Caco-2 (cell line): ENCODE measurements at regions of chr9 and their contacts with region 1.

Region 1: DNA sequence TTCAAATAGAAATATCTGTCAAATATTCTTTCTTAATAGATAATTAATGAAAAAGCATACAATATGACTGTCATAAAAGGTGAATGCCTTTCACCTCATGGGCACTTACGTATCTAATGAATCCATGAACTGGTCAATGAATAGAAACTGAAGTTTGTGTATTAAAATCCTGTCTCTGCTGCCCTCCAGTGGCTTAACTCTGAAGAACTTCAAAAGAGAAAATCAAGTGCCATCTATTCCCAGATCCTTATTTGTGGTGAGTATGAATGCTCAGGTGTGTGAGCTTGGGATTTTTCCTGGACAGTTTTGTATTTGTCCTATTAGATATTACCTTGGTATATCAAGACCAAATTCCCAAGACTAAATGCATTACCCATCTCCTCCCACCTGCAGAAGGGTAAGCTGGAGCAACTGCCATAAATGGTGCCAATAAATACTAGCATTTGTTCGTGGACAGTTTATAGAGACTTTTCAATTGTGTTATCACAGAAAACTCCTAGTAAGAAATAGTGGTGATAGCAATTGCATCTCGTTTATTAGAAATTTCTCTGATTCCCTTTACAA is 44.0 kb upstream of the SVEP1 start:
- DNase-seq: peak in 1 of 2 experiments; percentile 62
- H3K4me3 ChIP-seq: no peak overlapping the region
- H3K4me3 Mint-ChIP-seq: no peak overlapping the region
- H3K27ac Mint-ChIP-seq: no peak overlapping the region
- H3K4me1 ChIP-seq: no peaks in the 10 kb centered on the region
- H3K4me1 Mint-ChIP-seq: no peaks in the 10 kb centered on the region
- H3K27me3 ChIP-seq: no peaks in the 10 kb centered on the region
- H3K27me3 Mint-ChIP-seq: peaks cover 2% of the 10 kb centered on the region
- CTCF ChIP-seq: peak; percentile 55 to 77

Region 2: DNA sequence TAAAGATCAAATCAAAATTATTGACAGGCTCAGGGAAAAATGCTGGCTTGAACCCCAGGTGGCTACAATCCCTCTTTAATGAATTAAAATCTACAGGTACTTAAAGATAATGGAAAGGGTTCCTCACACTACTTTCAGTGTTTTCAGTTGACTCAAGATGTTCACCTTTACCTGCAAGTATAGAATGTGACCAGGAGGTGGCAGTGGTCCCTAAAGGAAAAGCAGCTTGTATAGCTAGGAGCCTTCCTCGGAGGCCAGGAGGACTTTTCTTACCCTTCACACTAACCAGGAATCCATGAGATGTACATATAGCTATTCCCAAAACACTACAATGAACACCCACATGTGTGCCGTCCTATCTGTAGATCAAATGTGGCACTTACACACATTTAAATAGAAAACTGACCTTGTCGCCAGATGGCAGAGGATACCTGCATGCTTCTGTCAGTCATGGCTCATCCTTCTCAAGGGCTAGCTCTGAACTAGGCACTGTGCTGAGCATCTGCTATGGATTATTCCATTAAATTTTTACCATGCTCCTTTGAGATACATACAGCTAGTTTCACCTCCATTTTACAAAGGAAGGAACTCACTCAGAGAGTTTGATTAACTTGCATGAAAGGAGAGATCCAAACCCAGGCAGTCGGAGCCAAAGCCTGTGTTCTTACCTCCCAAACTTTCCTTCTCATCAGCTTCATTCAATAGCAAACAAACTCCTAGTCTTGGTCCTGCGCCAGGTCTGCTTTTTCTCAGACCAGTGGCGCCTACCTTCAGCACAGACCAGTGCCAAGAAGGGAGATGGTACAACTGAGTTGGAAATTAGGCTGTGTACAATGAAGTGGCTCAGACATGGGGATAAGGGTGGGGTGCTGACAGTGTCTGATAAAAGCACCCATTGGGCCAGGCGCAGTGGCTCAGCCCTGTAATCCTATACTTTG is 440.1 kb before region 1 on chr9:
- CTCF ChIA-PET with region 1: interaction called, 16 read pairs
- POLR2A ChIA-PET with region 1: no interaction called
- intact Hi-C with region 1: loop called (anchors 1 kb)
- DNase-seq: peak; percentile 79 to 81
- H3K4me3 ChIP-seq: no peak overlapping the region
- H3K4me3 Mint-ChIP-seq: no peak overlapping the region
- H3K27ac Mint-ChIP-seq: no peak overlapping the region
- H3K4me1 ChIP-seq: no peaks in the 10 kb centered on the region
- H3K4me1 Mint-ChIP-seq: no peaks in the 10 kb centered on the region
- H3K27me3 ChIP-seq: no peaks in the 10 kb centered on the region
- H3K27me3 Mint-ChIP-seq: no peaks in the 10 kb centered on the region
- CTCF ChIP-seq: peak; percentile 70 to 87

Region 3: GRCh38 chr9:110340314-110340713 is 283.2 kb before region 1 on chr9:
- CTCF ChIA-PET with region 1: no interaction called
- POLR2A ChIA-PET with region 1: no interaction called
- intact Hi-C with region 1: loop called (anchors 1 kb)
- DNase-seq: peak in 1 of 2 experiments; percentile 32
- H3K4me3 ChIP-seq: no peak overlapping the region
- H3K4me3 Mint-ChIP-seq: no peak overlapping the region
- H3K27ac Mint-ChIP-seq: no peak overlapping the region
- H3K4me1 ChIP-seq: no peaks in the 10 kb centered on the region; the same call in 1 of the 2 replicates
- H3K4me1 Mint-ChIP-seq: no peaks in the 10 kb centered on the region
- H3K27me3 ChIP-seq: no peaks in the 10 kb centered on the region
- H3K27me3 Mint-ChIP-seq: no peaks in the 10 kb centered on the region
- CTCF ChIP-seq: peak; percentile 49 to 56

Region 4: GRCh38 chr9:110427497-110428104 is 195.9 kb before region 1 on chr9:
- CTCF ChIA-PET with region 1: interaction called, 4 read pairs
- POLR2A ChIA-PET with region 1: no interaction called
- intact Hi-C with region 1: loop called (anchors 5 kb)
- DNase-seq: peak; percentile 46 to 50
- H3K4me3 ChIP-seq: no peak overlapping the region
- H3K4me3 Mint-ChIP-seq: no peak overlapping the region
- H3K27ac Mint-ChIP-seq: no peak overlapping the region
- H3K4me1 ChIP-seq: peaks cover 6% of the 10 kb centered on the region; the same call in 1 of the 2 replicates
- H3K4me1 Mint-ChIP-seq: no peaks in the 10 kb centered on the region
- H3K27me3 ChIP-seq: no peaks in the 10 kb centered on the region
- H3K27me3 Mint-ChIP-seq: no peaks in the 10 kb centered on the region
- CTCF ChIP-seq: peak; percentile 34 to 53

Region 5: DNA sequence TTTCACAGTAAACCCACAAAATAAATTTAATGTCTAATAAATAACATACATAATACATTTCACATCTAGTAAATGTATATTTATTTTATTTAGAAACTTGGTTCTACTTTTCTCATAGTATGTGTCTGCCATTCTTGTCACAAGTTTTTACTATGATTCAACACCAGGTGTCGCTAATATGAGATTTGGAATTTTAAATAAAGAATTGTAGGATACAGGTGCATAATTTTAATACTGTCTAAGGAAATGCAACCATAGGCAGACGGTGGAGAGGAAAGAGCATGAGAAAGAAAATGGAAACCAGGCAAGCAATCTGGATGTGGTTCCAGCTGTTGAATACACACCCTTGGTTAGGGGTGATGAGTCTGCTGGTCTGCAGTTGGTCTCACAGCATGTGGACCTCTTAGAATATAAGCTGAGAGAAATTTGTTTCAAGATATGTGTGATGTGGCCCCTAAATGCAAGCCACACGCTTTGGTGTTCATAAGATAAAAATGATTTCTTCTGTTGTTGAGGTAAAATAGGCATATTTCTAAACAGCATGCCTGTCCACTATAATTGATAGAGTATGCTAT is 171.2 kb before region 1 on chr9:
- CTCF ChIA-PET with region 1: no interaction called
- POLR2A ChIA-PET with region 1: no interaction called
- intact Hi-C with region 1: loop called (anchors 1 kb)
- DNase-seq: no peak
- H3K4me3 ChIP-seq: no peak overlapping the region
- H3K4me3 Mint-ChIP-seq: no peak overlapping the region
- H3K27ac Mint-ChIP-seq: no peak overlapping the region
- H3K4me1 ChIP-seq: no peaks in the 10 kb centered on the region
- H3K4me1 Mint-ChIP-seq: no peaks in the 10 kb centered on the region
- H3K27me3 ChIP-seq: no peaks in the 10 kb centered on the region
- H3K27me3 Mint-ChIP-seq: peaks cover 5% of the 10 kb centered on the region
- CTCF ChIP-seq: peak; percentile 30 to 40

Region 6: GRCh38 chr9:110502842-110503241 is 120.7 kb before region 1 on chr9:
- CTCF ChIA-PET with region 1: no interaction called
- POLR2A ChIA-PET with region 1: no interaction called
- intact Hi-C with region 1: no loop called
- DNase-seq: no peak
- H3K4me3 ChIP-seq: no peak overlapping the region
- H3K4me3 Mint-ChIP-seq: no peak overlapping the region
- H3K27ac Mint-ChIP-seq: no peak overlapping the region
- H3K4me1 ChIP-seq: no peaks in the 10 kb centered on the region
- H3K4me1 Mint-ChIP-seq: no peaks in the 10 kb centered on the region
- H3K27me3 ChIP-seq: no peaks in the 10 kb centered on the region
- H3K27me3 Mint-ChIP-seq: peaks cover 19% of the 10 kb centered on the region
- CTCF ChIP-seq: no peak

Region 7: DNA sequence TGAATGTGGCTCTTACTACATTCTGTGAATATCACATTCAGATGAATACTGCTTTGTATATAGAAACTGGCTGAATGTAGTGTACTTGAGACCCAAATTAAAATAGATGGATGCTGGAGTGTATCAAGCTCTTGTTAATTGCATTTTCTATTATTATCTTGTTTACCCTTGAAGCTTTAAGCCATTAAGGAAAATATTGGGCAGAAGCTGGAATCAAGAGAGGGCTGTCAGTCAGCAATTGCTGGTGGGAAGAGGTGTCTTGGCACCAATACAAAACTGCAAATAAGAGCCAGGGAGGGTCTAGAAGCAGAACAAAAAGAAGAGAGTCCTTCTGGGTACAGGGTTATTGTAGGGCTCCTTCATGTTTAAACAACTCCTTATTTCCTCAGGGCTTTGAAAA is 83.9 kb after region 1 on chr9:
- CTCF ChIA-PET with region 1: no interaction called
- POLR2A ChIA-PET with region 1: no interaction called
- intact Hi-C with region 1: no loop called
- DNase-seq: no peak
- H3K4me3 ChIP-seq: no peak overlapping the region
- H3K4me3 Mint-ChIP-seq: no peak overlapping the region
- H3K27ac Mint-ChIP-seq: no peak overlapping the region
- H3K4me1 ChIP-seq: peaks cover 15% of the 10 kb centered on the region
- H3K4me1 Mint-ChIP-seq: peaks cover 12% of the 10 kb centered on the region
- H3K27me3 ChIP-seq: no peaks in the 10 kb centered on the region
- H3K27me3 Mint-ChIP-seq: no peaks in the 10 kb centered on the region
- CTCF ChIP-seq: no peak

Region 8: DNA sequence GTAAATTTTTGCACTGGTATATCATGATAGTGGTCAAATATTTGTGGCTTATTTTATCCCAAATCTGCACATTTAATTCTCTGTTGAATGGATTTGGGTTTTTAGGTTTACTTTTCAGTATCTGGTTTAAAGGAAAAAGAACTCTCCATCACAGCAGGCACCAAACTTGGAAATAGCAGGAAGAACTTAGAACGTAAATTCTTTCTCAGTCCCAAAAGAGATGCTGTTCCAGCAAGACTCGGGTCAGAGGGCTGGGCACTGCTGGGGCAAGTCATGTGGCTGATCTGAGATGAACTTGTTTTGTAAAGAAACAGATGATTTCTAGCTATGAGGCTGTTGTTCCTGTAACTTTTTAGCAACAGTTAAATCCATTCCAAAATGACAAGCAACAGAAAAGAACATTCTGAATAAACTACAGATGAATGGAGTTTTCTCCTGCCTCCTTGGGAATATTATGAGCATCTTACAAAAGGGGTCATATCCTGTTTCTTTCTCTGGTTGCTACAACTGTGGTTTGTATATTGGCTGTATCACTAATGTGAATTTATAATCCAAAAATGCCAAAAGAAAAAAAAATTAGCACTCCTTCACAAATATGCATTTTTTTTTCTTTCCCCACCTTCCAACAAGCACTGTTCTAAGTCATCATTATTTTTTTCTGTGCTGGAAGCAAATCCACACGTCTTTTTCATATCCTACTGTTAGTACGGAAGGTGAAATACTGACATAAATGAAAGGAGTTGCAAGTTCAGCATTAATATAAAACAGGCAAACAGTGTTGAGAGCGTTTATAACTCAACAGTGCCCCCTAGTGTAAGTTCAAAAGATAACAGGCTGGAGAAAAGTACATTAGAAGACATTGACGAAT is 675.4 kb after region 1 on chr9:
- CTCF ChIA-PET with region 1: interaction called, 3 read pairs
- POLR2A ChIA-PET with region 1: no interaction called
- intact Hi-C with region 1: loop called (anchors 5 kb)
- DNase-seq: peak in 1 of 2 experiments; percentile 49
- H3K4me3 ChIP-seq: no peak overlapping the region
- H3K4me3 Mint-ChIP-seq: no peak overlapping the region
- H3K27ac Mint-ChIP-seq: no peak overlapping the region
- H3K4me1 ChIP-seq: no peaks in the 10 kb centered on the region
- H3K4me1 Mint-ChIP-seq: no peaks in the 10 kb centered on the region
- H3K27me3 ChIP-seq: no peaks in the 10 kb centered on the region
- H3K27me3 Mint-ChIP-seq: no peaks in the 10 kb centered on the region
- CTCF ChIP-seq: peak; percentile 67 to 80